Sigmoid colon (tissue), 7 donors: ENCODE measurements at regions of chr15 and their contacts with region 1.

Region 1: DNA sequence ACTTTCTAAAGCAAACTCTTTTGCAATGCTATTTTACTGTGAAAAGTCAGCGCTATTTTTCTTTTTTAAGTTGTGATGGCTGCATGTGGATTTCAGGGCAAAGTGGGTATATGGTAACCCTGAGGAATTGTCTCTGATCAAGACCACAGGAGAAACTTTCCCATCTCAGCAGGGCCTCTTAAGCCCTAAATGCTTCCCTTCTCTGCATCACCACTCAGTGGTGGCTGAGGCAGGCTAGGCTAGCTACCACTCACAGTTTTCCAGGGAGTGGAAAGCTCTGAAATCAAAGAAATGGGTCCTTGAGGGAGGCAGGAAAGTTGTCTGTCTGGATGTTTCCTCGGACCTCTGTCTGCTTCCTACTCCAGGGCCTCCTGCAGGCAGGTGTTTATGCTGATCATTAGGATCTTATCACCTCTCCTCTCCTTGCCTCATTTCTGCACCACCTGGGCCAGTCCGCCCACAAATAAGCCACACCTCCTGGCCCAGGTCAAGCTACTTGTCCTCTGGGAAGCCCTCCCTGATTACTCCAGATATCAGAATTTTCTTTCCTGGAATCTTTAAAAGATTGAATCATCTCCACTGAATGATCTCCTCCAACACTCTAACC is 37.0 kb downstream of the CEMIP start:
- DNase-seq: no peak
- H3K4me3 ChIP-seq: no peak overlapping the region
- H3K27ac ChIP-seq: peak overlapping the region in 3 of 4 donors; percentile 18 to 74 (median 43)
- H3K4me1 ChIP-seq: peaks cover 0 to 44% (median 26%) of the 10 kb centered on the region in 4 donors
- H3K27me3 ChIP-seq: no peaks in the 10 kb centered on the region
- CTCF ChIP-seq: no peak
- EP300 ChIP-seq: no peak
- POLR2A ChIP-seq: no peak

Region 2: GRCh38 chr15:80934761-80935221 is 118.6 kb after region 1 on chr15:
- intact Hi-C with region 1: loop called (anchors 2 kb)
- DNase-seq: no peak
- H3K4me3 ChIP-seq: no peak overlapping the region
- H3K27ac ChIP-seq: peak overlapping the region in 3 of 4 donors; percentile 69 to 89 (median 76)
- H3K4me1 ChIP-seq: peaks cover 0 to 65% (median 56%) of the 10 kb centered on the region in 4 donors
- H3K27me3 ChIP-seq: no peaks in the 10 kb centered on the region
- CTCF ChIP-seq: no peak
- EP300 ChIP-seq: no peak
- POLR2A ChIP-seq: no peak

Region 3: DNA sequence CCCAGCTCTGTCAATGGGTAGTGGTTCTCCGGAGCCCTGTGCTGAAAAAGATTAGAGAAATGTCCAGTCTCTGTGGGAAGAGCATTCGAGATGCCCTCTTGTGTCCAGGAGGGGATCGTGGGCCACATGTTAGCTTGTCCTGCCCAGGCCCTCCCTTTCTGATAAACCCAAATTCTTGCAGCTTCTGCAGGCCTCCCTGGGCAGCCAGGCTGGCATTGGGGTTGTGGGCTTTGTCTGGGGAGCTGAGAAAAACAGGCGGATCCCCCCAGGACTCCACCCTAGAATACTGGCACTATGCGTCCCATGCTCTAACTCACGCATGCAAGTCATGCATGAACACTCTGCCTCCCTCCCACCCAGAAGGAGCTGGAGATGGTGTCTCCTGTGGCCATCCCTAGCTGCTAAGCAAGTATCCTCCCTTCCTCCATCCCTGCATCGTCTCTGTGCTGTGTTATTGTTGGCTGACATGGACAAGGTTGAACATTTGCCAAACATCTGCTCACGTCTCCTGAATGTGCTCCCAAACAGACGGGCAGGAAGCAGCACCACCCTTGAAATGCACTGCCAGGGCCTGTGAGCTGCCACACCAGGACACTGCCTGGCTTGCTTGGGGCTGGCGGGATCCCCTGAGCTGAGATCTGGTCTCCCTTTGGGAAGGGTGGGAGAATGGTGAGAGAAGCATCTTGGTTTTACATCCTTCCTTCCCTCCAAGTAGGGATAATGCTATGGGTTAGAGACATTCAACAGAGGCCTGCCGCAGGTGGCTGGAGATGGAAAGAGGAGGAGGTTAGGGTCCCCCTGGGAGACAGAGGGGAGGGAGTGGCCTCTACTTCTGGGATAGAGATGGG is 344.4 kb after region 1 on chr15:
- intact Hi-C with region 1: no loop called
- DNase-seq: peak; percentile 75
- H3K4me3 ChIP-seq: no peak overlapping the region
- H3K27ac ChIP-seq: peak overlapping the region; percentile 7 to 59 (median 16)
- H3K4me1 ChIP-seq: peaks cover 0 to 25% (median 19%) of the 10 kb centered on the region in 4 donors
- H3K27me3 ChIP-seq: no peaks in the 10 kb centered on the region
- CTCF ChIP-seq: no peak
- EP300 ChIP-seq: no peak
- POLR2A ChIP-seq: no peak